CD14-positive monocyte (primary cell): ENCODE measurements at regions of chr15 and their contacts with region 1.

Region 1: GRCh38 chr15:40160689-40161688 is at the start of gene BUB1B:
- DNase-seq: peak; percentile 85 to 91 (median 87)
- H3K4me3 ChIP-seq: peak within 1 kb of the TSS; percentile 81 to 88 (median 87)
- H3K4me3 Mint-ChIP-seq: no peak within 1 kb of the TSS
- H3K27ac ChIP-seq: peak within 1 kb of the TSS in 1 of 2 donors; percentile 59
- H3K27ac Mint-ChIP-seq: no peak within 1 kb of the TSS
- H3K4me1 ChIP-seq: peaks cover 21 to 25% of the 10 kb centered on the region in 2 donors
- H3K4me1 Mint-ChIP-seq: peaks cover 8% of the 10 kb centered on the region
- H3K27me3 ChIP-seq: no peaks in the 10 kb centered on the region
- H3K27me3 Mint-ChIP-seq: peaks cover 0 to 7% (median 0%) of the 10 kb centered on the region in 3 donors
- CTCF ChIP-seq: no peak
- polyA plus RNA-seq, gene BUB1B: 0.01 to 0.51 TPM in 2 of 3 donors, not detected in the other

Region 2: GRCh38 chr15:40038638-40039543 is 122.1 kb before region 1 on chr15 and contains the start of gene SRP14:
- intact Hi-C with region 1: loop called in 1 of 2 experiments (anchors 2 kb)
- DNase-seq: peak; percentile 85 to 97 (median 89)
- H3K4me3 ChIP-seq: peak within 1 kb of the TSS; percentile 71 to 91 (median 73)
- H3K4me3 Mint-ChIP-seq: peak within 1 kb of the TSS; percentile 96 to 98
- H3K27ac ChIP-seq: peak within 1 kb of the TSS; percentile 73 to 93
- H3K27ac Mint-ChIP-seq: peak within 1 kb of the TSS; percentile 94 to 98 (median 97)
- H3K4me1 ChIP-seq: peaks cover 11 to 23% of the 10 kb centered on the region in 2 donors
- H3K4me1 Mint-ChIP-seq: peaks cover 23% of the 10 kb centered on the region
- H3K27me3 ChIP-seq: no peaks in the 10 kb centered on the region
- H3K27me3 Mint-ChIP-seq: peaks cover 0 to 2% (median 0%) of the 10 kb centered on the region in 3 donors
- CTCF ChIP-seq: no peak
- polyA plus RNA-seq, gene SRP14: 181 to 548 (median 525) TPM

Region 3: DNA sequence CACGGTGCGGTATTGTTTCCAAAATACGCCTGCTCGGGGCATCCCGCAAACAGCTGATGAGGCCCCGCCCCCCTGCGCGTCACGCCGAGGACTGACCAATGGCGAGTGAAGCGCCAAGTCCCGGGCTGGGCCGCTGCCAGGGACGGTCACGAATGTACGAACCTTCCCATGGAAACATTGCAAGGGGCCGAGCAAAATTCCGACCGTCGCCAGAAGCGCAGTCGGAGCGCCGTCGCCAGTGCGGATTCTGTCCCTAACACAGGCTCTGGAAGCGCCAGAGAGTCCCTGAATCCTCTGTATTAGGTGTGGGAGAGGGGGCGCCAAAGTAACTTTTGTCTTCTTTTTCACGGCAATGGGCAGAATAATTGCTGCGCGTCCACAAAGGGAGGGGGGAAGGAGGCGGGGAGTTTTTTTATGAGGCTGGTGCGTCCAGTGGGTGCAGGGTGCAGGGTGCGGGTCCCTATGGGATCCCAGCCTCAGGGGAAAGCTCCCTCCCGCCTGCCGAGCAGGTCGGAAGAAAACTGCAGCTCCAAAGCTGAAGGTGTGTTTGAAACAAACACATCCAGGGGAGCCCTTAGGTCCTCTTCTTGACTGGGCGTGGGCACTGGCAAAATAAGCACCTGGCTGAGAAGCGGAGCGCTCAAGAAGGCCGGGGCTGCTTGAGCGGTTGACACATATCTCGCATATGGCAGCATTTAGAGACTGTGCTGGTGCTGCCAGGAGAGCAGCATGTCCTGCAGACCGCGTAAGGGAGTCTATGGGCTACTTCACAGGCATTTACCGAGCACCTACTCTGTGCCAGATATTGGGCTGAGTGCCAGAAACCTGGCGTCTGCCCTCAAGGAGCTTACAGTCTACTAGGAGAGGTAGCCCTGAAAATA is 51.9 kb before region 1 on chr15 and contains the start of gene BMF:
- intact Hi-C with region 1: loop called (anchors 2 to 5 kb)
- DNase-seq: peak; percentile 96 to 98 (median 97)
- H3K4me3 ChIP-seq: peak within 1 kb of the TSS; percentile 91 to 93 (median 92)
- H3K4me3 Mint-ChIP-seq: peak within 1 kb of the TSS; percentile 89 to 95
- H3K27ac ChIP-seq: peak within 1 kb of the TSS; percentile 95 to 97
- H3K27ac Mint-ChIP-seq: peak within 1 kb of the TSS; percentile 94 to 99 (median 97)
- H3K4me1 ChIP-seq: peaks cover 47 to 51% of the 10 kb centered on the region in 2 donors
- H3K4me1 Mint-ChIP-seq: peaks cover 48% of the 10 kb centered on the region
- H3K27me3 ChIP-seq: no peaks in the 10 kb centered on the region
- H3K27me3 Mint-ChIP-seq: peaks cover 0 to 3% (median 1%) of the 10 kb centered on the region in 3 donors
- CTCF ChIP-seq: no peak
- polyA plus RNA-seq, gene BMF: 5.6 to 59.6 (median 6.5) TPM